ENCODE measurements at regions of chr15 and their contacts with region 1.

Region 1: DNA sequence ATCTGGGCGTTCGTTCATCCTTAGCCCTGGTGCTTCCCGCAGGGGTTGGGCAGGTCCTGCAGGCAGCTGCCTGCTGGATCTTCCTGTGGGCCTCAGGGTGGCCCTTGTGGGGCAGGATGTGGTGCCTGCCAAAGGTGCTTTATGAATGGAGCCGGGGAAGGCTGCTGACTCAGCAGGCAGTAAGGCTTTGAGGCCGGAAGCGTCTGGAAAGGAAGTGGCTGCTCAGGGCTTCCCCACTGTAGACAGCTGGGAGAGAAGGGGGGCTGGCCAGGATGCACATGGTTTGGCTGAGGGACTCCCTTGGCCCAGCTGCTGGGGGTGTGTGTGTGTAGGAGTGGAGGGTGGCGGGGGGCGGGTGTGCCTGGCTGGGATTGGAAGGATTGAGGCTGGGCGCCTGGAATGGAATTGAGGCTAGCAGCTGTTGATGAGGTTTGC is 12.9 kb downstream of the CD276 start:
- DNase-seq: peak; percentile 93
- H3K4me3 ChIP-seq: no peak overlapping the region
- H3K27ac ChIP-seq: peak overlapping the region in 2 of 4 donors; percentile 21 to 47
- H3K4me1 ChIP-seq: peaks cover 0 to 48% (median 40%) of the 10 kb centered on the region in 4 donors
- H3K27me3 ChIP-seq: peaks cover 0 to 2% (median 0%) of the 10 kb centered on the region in 3 donors
- CTCF ChIP-seq: no peak
- EP300 ChIP-seq: no peak
- POLR2A ChIP-seq: no peak

Region 2: DNA sequence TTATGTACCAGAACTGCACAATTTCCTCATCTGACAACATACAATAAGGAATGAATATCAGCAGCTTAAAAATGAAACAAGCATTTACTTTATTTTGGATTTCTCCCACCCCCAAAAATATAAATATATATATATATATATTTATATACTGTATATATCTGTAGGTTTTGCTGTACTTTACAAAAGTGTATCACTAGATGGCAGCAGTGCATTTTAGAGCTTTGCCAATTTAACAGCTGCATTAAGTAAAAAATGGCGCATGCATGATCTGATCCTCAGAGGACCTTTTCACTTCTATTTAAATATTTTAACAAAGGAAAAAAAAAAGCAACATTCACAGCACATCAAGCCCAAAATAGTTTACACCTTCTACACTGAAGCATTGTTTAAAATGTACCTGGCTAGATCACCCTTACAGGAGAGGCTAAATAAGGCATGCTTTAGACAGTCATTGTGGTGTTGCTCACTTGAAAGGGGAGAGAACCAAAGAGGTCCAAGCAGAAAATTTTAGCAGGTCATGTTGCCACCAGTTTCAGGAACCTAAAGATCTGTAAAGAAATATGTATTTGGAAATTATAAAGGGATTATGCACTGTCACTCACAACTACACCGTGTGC is 136.4 kb before region 1 on chr15:
- intact Hi-C with region 1: loop called (anchors 5 kb)
- DNase-seq: no peak
- H3K4me3 ChIP-seq: no peak overlapping the region
- H3K27ac ChIP-seq: peak overlapping the region in 1 of 4 donors; percentile 21
- H3K4me1 ChIP-seq: peaks cover 0 to 20% (median 13%) of the 10 kb centered on the region in 4 donors
- H3K27me3 ChIP-seq: no peaks in the 10 kb centered on the region
- CTCF ChIP-seq: peak in 2 of 4 experiments; percentile 23 to 54
- EP300 ChIP-seq: no peak
- POLR2A ChIP-seq: no peak

Region 3: GRCh38 chr15:73677146-73677607 is 19.9 kb before region 1 on chr15:
- intact Hi-C with region 1: loop called (anchors 1 kb)
- DNase-seq: peak; percentile 85
- H3K4me3 ChIP-seq: no peak overlapping the region
- H3K27ac ChIP-seq: peak overlapping the region in 1 of 4 donors; percentile 40
- H3K4me1 ChIP-seq: peaks cover 0 to 6% (median 4%) of the 10 kb centered on the region in 4 donors
- H3K27me3 ChIP-seq: peaks cover 0 to 12% (median 0%) of the 10 kb centered on the region in 3 donors
- CTCF ChIP-seq: peak; percentile 86 to 97 (median 95)
- EP300 ChIP-seq: no peak
- POLR2A ChIP-seq: no peak

Measured in sigmoid colon (tissue), 7 donors.